Activated CD8-positive, alpha-beta T cell treated with anti-CD3 and anti-CD28 coated beads for 36 hours (primary cell): ENCODE measurements at regions of chr17 and their contacts with region 1.

Region 1: DNA sequence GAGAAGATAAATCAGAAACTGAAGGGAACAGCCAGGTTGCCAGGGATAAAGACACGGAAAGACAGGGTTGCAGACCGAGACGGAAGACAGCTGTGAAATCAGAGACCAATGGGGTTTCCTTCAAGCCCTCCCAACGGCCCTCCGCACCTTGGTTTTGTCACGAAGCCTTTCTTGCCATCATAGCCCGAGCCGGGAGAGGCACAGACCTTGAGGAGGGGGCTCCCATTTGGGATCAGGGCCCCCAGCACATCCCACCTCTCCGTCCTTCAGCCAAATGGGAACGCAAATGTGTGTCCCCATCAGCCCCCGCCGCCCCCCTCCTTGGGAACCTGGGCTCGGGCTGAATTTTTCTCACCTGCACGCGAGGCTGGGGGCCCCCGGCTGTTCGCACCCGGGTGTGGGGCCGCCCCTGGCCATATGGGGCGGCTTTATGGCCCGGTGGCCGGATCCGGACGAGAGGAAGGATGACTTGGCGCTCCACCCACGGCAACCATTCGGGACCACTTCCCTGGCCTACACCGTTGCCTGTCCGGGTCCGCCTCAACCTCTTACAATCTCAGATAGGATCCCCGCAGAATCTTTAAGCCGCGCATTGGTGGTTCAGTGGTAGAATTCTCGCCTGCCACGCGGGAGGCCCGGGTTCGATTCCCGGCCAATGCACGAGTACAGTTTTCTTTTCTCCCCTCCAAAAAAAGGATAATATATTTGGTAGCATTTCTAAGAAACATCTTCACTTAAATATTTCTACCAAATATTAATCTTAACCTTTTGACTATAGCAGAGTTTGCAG is 1.4 kb upstream of the HES7 start:
- DNase-seq: peak; percentile 93
- ATAC-seq: peak; percentile 28
- H3K4me3 Mint-ChIP-seq: peak overlapping the region; percentile 97
- H3K27ac Mint-ChIP-seq: peak overlapping the region; percentile 90
- H3K4me1 Mint-ChIP-seq: peaks cover 45% of the 10 kb centered on the region
- H3K27me3 Mint-ChIP-seq: peaks cover 32% of the 10 kb centered on the region
- CTCF ChIP-seq: no peak

Region 2: GRCh38 chr17:8151123-8151640 is 25.8 kb after region 1 on chr17:
- CTCF ChIA-PET with region 1: interaction called, 27 read pairs
- POLR2A ChIA-PET with region 1: interaction called, 32 read pairs
- intact Hi-C with region 1: loop called (anchors 2 kb)
- DNase-seq: peak; percentile 91
- ATAC-seq: peak; percentile 29
- H3K4me3 Mint-ChIP-seq: no peak overlapping the region
- H3K27ac Mint-ChIP-seq: peak overlapping the region; percentile 65
- H3K4me1 Mint-ChIP-seq: peaks cover 38% of the 10 kb centered on the region
- H3K27me3 Mint-ChIP-seq: no peaks in the 10 kb centered on the region
- CTCF ChIP-seq: no peak

Region 3: DNA sequence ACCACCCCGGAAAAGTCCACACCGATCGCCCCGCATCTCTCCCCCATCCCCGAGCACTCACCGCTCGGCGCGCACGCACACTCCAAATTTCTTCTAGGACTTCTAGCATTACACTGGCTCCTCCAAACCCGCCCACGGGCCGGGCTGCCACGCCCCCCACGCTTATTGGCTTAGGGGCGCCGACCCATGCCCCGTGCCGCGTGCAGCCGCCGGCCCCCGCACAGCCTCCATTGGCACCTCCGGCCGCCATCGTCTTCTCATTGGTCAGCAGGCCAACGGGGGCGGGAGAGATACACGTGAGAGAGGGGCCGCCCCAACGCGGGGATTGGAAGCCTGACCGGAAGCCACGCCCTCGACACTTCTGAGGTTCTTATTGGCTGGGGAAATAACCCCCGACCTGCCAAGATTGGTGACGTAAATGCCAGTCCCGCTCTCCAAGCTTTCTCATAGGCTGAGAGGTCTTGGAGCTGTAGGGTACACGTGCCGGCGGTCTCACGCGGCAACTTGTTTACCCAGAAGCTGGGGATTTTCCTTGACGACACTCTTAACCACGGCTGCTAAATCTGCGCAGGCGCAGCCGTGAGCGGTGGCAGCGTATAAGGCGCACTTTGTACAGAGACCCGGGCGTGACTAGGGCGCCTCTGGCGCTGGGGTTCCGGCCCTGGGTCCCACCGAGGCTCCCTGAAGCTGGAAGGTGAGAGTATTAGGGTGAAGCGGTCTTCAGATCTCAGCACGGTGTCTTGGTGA is 31.1 kb after region 1 on chr17:
- CTCF ChIA-PET with region 1: interaction called, 27 read pairs
- POLR2A ChIA-PET with region 1: interaction called, 32 read pairs
- intact Hi-C with region 1: loop called (anchors 2 kb)
- DNase-seq: peak; percentile 100
- ATAC-seq: peak; percentile 73
- H3K4me3 Mint-ChIP-seq: no peak overlapping the region
- H3K27ac Mint-ChIP-seq: no peak overlapping the region
- H3K4me1 Mint-ChIP-seq: peaks cover 59% of the 10 kb centered on the region
- H3K27me3 Mint-ChIP-seq: no peaks in the 10 kb centered on the region
- CTCF ChIP-seq: no peak

Region 4: DNA sequence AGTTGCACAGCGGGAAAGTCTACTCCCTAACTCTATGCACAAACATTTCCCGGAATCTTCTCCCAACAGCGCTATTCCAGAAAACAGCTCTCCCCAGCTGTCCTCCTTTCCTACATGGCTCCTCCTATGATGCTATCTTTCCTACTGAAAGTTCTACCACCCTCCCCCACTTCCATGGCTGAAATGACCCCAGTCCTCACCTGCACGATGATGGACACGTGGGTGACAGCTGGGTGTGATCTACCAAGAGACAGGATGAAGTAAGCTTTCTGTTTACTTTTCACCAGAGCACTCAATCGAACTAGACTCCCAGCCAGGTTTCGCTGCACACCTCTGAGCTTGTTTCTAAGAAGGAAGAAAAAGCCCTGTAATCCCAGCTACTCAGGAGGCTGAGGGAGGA is 111.8 kb after region 1 on chr17:
- CTCF ChIA-PET with region 1: no interaction called
- POLR2A ChIA-PET with region 1: no interaction called
- intact Hi-C with region 1: no loop called
- DNase-seq: no peak
- ATAC-seq: no peak
- H3K4me3 Mint-ChIP-seq: no peak overlapping the region
- H3K27ac Mint-ChIP-seq: no peak overlapping the region
- H3K4me1 Mint-ChIP-seq: peaks cover 11% of the 10 kb centered on the region
- H3K27me3 Mint-ChIP-seq: no peaks in the 10 kb centered on the region
- CTCF ChIP-seq: no peak